ENCODE measurements at regions of chrX and their contacts with region 1.

Region 1: DNA sequence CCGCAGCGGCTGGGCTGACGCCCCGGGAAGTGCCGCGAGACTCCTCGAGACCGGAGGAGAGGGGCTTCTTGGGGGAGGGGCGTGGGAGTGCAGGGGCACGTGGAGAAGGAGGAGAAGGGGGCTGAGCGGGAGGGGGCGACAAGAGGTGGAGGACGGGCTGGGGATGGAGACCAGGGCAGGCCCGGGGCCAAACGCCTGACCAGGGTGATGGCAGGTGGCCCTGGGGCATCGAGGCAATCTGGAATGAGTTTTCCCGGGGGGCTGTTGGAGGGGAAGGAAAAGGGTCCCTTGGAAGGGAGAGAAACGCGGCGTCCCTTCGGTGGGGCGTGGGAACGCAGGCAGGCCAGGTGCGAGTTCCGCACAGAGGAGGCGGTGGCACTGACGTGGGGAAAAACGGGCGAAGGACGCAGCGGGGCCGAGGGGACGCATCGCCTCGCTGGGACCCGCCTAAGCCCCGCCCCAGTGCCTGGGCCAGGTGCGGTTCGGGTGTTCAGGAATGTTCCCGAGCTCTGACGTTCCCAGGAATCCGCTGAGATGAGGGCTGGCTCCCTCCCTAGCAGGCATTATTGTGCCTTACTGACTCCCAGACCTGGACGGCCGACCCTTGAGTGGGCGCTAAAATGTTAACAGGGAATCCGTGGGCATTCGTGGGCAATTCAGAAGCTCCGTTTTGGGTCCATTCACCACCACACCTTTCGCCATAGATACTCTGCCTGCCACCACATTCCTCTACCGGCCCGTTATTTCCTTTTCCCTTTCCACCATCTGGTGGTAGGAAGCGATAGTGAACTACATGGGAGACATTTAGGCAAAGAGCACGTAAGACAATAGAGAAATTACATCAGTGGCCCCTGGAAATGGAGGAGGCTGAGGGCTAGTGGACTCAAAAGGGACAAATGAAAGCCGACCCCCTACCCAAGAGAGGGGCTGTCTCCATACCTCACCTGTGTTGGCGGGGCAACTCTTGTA is 795 bp upstream of the SH3KBP1 start:
- DNase-seq: peak; percentile 22 to 64 (median 50)
- ATAC-seq: peak; percentile 61 to 86 (median 70)
- H3K4me3 ChIP-seq: peak overlapping the region; percentile 26 to 94 (median 78)
- H3K27ac ChIP-seq: peak overlapping the region in 11 of 12 donors; percentile 32 to 64 (median 49)
- H3K4me1 ChIP-seq: peaks cover 0 to 30% (median under 1%) of the 10 kb centered on the region in 12 donors
- H3K27me3 ChIP-seq: no peaks in the 10 kb centered on the region
- CTCF ChIP-seq: peak; percentile 34 to 62 (median 54)
- POLR2A ChIP-seq: no peak

Region 2: GRCh38 chrX:19372170-19372546 is 516.0 kb before region 1 on chrX:
- intact Hi-C with region 1: loop called in 6 of 10 experiments (anchors 2 to 5 kb)
- DNase-seq: peak in 4 of 5 donors; percentile 41 to 66 (median 50)
- ATAC-seq: peak; percentile 19 to 81 (median 72)
- H3K4me3 ChIP-seq: peak overlapping the region in 11 of 12 donors; percentile 8 to 58 (median 44)
- H3K27ac ChIP-seq: no peak overlapping the region
- H3K4me1 ChIP-seq: peaks cover 0 to 2% (median 0%) of the 10 kb centered on the region in 12 donors
- H3K27me3 ChIP-seq: no peaks in the 10 kb centered on the region
- CTCF ChIP-seq: peak; percentile 47 to 76 (median 61)
- POLR2A ChIP-seq: no peak

Region 3: DNA sequence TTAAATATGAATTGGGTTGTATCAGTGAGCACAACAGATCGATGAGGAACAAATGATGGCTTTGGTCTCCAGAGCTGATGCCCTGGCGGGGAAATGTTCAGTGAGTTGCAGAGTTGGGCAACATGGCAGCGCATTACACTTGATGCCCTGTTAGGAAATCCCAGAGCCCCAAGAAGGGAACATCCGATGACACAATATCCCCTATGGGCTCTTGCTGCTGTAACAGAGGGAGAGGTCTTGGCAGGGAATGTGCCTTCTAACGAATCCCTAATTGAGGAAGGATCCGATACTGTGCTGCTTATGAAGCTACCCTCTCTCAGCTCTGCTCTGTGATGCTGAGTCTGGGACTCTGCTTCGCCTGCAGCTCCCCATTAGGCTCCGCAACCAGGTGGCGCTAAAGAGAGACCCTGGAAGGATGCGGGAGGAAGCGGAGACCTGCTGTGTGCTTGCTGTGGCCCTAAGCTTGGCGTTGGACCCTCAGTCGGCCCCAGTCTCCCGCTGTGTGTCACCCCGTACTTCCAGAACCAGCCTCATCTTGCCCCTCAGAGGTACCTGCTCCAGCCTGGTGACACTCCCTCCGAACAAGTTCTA is 505.5 kb before region 1 on chrX:
- intact Hi-C with region 1: loop called in 1 of 10 experiments (anchors 5 kb)
- DNase-seq: peak in 4 of 5 donors; percentile 11 to 48 (median 36)
- ATAC-seq: peak in 3 of 4 donors; percentile 53 to 74 (median 61)
- H3K4me3 ChIP-seq: no peak overlapping the region
- H3K27ac ChIP-seq: no peak overlapping the region
- H3K4me1 ChIP-seq: no peaks in the 10 kb centered on the region
- H3K27me3 ChIP-seq: peaks cover 0 to 4% (median 0%) of the 10 kb centered on the region in 9 donors
- CTCF ChIP-seq: peak; percentile 19 to 61 (median 41)
- POLR2A ChIP-seq: no peak

Region 4: DNA sequence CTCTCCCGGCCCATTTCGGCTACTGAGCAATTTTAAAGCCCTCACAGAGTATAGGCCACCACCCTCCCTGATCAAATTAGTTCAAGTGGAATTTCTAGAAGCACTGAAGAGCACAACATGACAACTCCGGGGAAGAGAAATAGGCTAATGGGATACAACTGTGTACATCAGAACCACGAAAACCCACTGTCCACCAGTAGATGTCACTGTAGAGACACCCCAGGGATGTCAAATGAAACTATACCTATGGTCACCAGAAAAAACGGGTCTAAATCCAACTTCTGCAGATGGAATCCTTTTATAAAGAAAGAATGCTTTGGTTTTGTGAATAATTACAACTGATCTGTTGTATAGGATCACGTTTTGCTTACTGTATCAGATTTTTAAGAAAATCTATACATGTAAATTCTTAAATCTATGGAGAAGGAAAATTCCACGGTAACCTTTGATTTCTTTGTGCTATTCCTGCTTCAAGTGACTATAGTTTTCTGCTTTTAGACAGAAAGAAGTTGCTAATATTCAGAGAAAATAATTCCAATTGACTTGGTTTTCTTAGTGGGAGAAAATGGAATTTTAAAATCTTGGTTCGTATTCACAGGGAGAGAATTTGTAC is 343.4 kb before region 1 on chrX:
- intact Hi-C with region 1: loop called in 7 of 10 experiments (anchors 2 to 10 kb)
- DNase-seq: peak in 3 of 5 donors; percentile 23 to 35 (median 31)
- ATAC-seq: peak; percentile 64 to 84 (median 76)
- H3K4me3 ChIP-seq: no peak overlapping the region
- H3K27ac ChIP-seq: peak overlapping the region in 4 of 12 donors; percentile 18 to 42 (median 30)
- H3K4me1 ChIP-seq: peaks cover 0 to 4% (median 0%) of the 10 kb centered on the region in 12 donors
- H3K27me3 ChIP-seq: no peaks in the 10 kb centered on the region
- CTCF ChIP-seq: peak; percentile 49 to 80 (median 66)
- POLR2A ChIP-seq: no peak

Region 5: DNA sequence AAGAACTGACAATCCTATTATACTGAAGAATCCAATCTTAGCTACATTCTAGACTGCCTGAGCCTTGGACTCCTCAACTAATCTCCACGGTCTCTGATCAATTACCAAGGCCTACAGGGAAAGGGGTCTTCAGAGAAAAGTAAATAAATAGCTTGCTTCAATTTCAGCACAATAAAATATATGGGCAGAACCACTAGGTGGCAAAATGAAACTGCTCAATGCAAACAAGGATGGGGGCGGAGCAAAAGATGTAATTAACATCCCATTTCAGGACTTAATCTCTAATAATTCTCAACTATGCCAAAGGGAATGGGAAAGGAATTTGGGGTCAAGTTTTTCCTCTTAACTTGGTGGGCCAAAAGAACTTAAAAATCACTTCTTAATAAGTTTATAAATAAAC is 294.5 kb before region 1 on chrX:
- intact Hi-C with region 1: loop called (anchors 2 to 10 kb)
- DNase-seq: peak in 1 of 5 donors; percentile 12
- ATAC-seq: peak in 1 of 4 donors; percentile 32
- H3K4me3 ChIP-seq: no peak overlapping the region
- H3K27ac ChIP-seq: no peak overlapping the region
- H3K4me1 ChIP-seq: peaks cover 0 to 21% (median 4%) of the 10 kb centered on the region in 12 donors
- H3K27me3 ChIP-seq: no peaks in the 10 kb centered on the region
- CTCF ChIP-seq: peak; percentile 25 to 56 (median 47)
- POLR2A ChIP-seq: no peak

Region 6: DNA sequence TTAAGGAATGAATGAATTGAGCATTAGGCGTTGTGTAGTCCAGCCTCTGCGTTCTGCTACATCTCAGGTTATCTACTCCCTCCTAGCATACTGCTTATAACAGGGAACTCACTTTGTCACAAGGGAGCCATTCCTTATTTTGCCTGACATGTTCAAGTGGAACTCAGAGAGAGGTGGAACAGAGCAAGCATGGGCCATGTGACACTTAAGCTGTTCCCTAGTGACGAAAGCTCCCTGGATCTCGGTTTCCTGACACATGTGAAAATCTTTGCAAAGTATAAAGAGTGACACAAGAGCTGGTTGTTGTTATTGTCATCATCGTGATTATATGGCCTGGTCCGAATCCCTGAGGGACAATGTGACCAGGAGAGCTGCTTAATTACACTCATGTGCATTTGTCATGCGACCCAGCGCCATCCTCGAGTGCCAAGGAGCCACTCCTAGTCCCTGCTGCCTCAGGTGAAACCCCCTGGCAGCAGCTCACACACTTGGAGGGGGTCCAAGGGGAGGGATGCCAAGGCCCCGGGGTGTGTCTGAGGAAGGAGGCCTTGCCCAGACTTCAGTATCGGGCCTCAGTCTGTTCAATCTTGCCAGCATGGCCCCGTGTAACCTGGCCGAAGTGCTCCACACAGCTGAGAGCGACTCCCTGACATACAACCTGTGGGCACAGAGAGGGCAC is 274.4 kb before region 1 on chrX:
- intact Hi-C with region 1: no loop called
- DNase-seq: peak in 2 of 5 donors; percentile 35 to 46
- ATAC-seq: peak; percentile 78 to 89 (median 83)
- H3K4me3 ChIP-seq: no peak overlapping the region
- H3K27ac ChIP-seq: peak overlapping the region in 3 of 12 donors; percentile 24 to 37 (median 25)
- H3K4me1 ChIP-seq: peaks cover 0 to 14% (median 6%) of the 10 kb centered on the region in 12 donors
- H3K27me3 ChIP-seq: no peaks in the 10 kb centered on the region
- CTCF ChIP-seq: no peak
- POLR2A ChIP-seq: no peak

Region 7: DNA sequence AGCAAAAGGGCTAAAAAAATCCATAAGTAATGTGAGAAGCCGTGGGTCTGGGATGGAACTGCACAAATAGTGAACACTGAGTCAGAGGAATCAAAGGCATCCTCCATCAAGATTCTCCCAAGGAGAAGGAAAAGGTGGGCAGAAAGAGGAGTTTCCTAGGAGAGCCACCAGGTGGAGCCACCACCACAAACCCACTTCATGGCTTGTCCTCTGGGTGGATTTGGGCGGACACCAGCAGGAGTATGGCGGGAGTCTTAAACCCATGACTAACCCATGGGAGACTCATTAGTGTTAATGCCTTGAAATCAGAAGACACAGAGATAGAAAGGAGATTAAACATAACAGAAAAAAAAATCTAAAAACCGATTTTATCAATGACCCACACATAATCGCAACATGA is 148.5 kb before region 1 on chrX:
- intact Hi-C with region 1: loop called (anchors 1 to 5 kb)
- DNase-seq: peak; percentile 40 to 61 (median 52)
- ATAC-seq: peak in 3 of 4 donors; percentile 61 to 77 (median 73)
- H3K4me3 ChIP-seq: no peak overlapping the region
- H3K27ac ChIP-seq: no peak overlapping the region
- H3K4me1 ChIP-seq: peaks cover 0 to 9% (median 0%) of the 10 kb centered on the region in 12 donors
- H3K27me3 ChIP-seq: peaks cover 0 to 10% (median 0%) of the 10 kb centered on the region in 9 donors
- CTCF ChIP-seq: peak; percentile 49 to 70 (median 60)
- POLR2A ChIP-seq: no peak

Region 8: GRCh38 chrX:19772826-19773628 is 115.2 kb before region 1 on chrX:
- intact Hi-C with region 1: loop called in 1 of 10 experiments (anchors 10 kb)
- DNase-seq: no peak
- ATAC-seq: peak in 1 of 4 donors; percentile 11
- H3K4me3 ChIP-seq: no peak overlapping the region
- H3K27ac ChIP-seq: peak overlapping the region; percentile 2 to 80 (median 66)
- H3K4me1 ChIP-seq: peaks cover 0 to 47% (median 11%) of the 10 kb centered on the region in 12 donors
- H3K27me3 ChIP-seq: no peaks in the 10 kb centered on the region
- CTCF ChIP-seq: no peak
- POLR2A ChIP-seq: no peak

Measured in heart left ventricle (tissue), 16 donors.